Mammary epithelial cell (primary cell): ENCODE measurements at regions of chr15 and their contacts with region 1.

Region 1: GRCh38 chr15:69515508-69515907 is 62.9 kb downstream of the RPLP1 start:
- DNase-seq: no peak
- H3K4me3 ChIP-seq: no peak overlapping the region
- H3K27ac ChIP-seq: no peak overlapping the region
- H3K4me1 ChIP-seq: no peaks in the 10 kb centered on the region
- H3K27me3 ChIP-seq: no peaks in the 10 kb centered on the region
- CTCF ChIP-seq: no peak

Region 2: DNA sequence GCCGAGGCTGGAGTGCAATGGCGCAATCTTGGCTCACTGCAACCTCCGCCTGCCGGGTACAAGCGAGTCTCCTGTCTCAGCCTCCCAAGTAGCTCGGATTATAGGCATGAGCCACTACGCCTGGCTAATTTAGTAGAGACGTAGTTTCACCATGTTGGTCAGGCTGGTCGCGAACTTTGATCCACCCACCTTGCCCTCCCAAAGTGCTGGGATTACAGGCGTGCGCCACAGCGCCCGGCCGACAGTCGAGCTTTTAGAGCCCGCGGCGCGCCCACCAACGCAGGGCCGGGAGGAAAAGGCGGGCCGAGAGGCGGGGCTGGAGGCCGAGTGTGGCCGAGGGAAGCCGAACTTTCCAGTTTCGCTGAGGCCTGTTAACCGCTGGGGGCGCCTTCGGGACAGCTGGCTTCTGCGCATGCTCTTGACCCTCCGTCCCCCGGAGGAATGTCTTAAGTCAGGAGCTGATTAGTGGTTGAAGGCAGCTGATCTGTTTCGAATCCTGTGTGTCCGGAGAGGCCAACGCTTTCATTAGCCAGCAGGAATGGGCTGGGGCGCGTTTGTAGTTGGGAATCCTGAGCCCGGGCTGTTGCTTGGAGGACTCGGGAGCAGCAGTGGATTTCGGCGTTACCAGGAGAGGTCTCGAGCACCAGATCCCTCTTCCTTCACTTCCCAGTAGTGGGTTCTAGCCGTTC is 52.9 kb before region 1 on chr15:
- CTCF ChIA-PET with region 1: no interaction called
- dilution Hi-C with region 1: no loop called
- in situ Hi-C with region 1: no loop called
- intact Hi-C with region 1: no loop called
- DNase-seq: peak; percentile 96
- H3K4me3 ChIP-seq: peak overlapping the region; percentile 57 to 66 (median 61)
- H3K27ac ChIP-seq: peak overlapping the region; percentile 92
- H3K4me1 ChIP-seq: peaks cover 22% of the 10 kb centered on the region
- H3K27me3 ChIP-seq: no peaks in the 10 kb centered on the region
- CTCF ChIP-seq: peak; percentile 86 to 89

Region 3: DNA sequence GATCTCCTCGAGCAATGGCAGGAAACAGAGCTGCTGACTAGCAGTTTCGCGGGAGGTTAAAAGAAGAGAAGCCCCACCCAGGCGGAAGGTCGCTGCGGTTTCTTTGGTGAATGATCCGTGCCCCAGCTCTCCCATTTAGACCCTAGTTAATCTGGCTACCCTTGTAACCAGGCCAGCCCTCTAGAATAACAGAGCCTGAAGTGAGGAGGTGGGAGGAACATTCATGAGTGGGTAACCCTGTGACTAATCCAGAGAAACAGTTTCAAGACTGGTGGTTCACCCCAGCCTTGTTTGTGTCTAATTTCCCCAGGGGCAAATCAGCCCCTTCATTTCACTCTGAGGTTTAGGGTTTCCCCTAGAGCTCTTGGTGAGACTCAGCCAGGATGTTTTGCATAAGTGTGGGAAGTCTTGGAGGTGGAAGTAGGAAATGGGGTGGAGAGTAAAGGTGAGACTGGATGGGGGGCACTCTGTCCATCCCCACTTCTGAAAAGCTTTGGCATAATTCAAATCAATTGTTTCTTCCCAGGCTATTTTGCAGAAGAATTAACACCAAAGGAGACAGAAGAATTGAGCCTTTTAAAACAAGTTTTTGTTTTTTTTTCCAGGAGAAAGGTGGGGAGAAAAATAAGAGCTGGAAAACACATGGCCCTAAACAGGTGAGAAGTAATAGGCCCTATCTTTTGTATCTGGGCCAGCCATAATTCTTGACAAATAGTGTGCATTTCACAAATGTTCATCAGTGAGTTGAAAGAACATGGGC is 240.2 kb after region 1 on chr15:
- CTCF ChIA-PET with region 1: no interaction called
- dilution Hi-C with region 1: no loop called
- in situ Hi-C with region 1: no loop called
- intact Hi-C with region 1: no loop called
- DNase-seq: peak; percentile 12
- H3K4me3 ChIP-seq: no peak overlapping the region
- H3K27ac ChIP-seq: no peak overlapping the region
- H3K4me1 ChIP-seq: peaks cover 18% of the 10 kb centered on the region
- H3K27me3 ChIP-seq: no peaks in the 10 kb centered on the region
- CTCF ChIP-seq: no peak

Region 4: DNA sequence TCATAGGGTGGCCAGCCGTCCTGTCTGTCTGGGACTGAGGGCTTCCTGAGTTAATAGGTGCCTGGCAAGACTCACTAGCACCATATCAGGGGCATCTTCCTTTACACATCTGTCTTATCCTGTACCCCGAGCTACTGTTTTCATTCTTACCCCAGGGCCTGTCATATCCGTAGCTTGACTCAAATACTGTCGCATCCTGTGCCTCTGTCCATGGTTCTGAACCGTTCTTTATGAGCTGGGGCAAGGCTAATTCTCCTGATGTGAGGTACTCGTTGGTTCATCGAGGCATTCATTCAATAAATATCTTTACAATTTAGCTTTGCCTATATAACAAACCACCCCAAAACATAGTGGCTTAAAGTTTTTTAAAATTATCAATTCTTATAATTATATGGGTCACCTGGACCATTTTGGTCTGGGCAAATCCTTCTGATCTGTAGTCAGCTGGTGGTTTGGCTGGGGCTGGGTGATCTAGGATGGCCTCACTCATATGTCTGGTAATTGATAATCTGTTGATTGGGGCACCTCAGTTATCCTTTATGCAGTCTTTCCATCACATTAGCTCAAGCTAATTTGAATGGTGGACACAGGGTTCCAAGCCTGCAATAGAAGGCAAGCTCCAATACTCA is 461.0 kb after region 1 on chr15:
- CTCF ChIA-PET with region 1: no interaction called
- dilution Hi-C with region 1: loop called (anchors 5 kb)
- in situ Hi-C with region 1: no loop called
- intact Hi-C with region 1: no loop called
- DNase-seq: peak; percentile 35
- H3K4me3 ChIP-seq: no peak overlapping the region
- H3K27ac ChIP-seq: no peak overlapping the region
- H3K4me1 ChIP-seq: no peaks in the 10 kb centered on the region
- H3K27me3 ChIP-seq: no peaks in the 10 kb centered on the region
- CTCF ChIP-seq: no peak